Common myeloid progenitor, CD34-positive (primary cell): ENCODE measurements at regions of chr3 and their contacts with region 1.

Region 1: GRCh38 chr3:19213601-19214220 is 65.4 kb downstream of the KCNH8 start:
- DNase-seq: peak; percentile 62 to 83 (median 83)
- H3K4me3 ChIP-seq: no peak overlapping the region
- H3K27ac ChIP-seq: no peak overlapping the region
- H3K4me1 ChIP-seq: peaks cover 0 to 11% (median 6%) of the 10 kb centered on the region in 4 experiments
- H3K27me3 ChIP-seq: no peaks in the 10 kb centered on the region

Region 2: GRCh38 chr3:19146685-19147650 is 66.7 kb before region 1 on chr3:
- CTCF ChIA-PET with region 1: interaction called, 11 read pairs
- POLR2A ChIA-PET with region 1: no interaction called
- DNase-seq: peak; percentile 88 to 95 (median 94)
- H3K4me3 ChIP-seq: peak overlapping the region; percentile 70 to 91 (median 78)
- H3K27ac ChIP-seq: peak overlapping the region; percentile 40 to 61
- H3K4me1 ChIP-seq: peaks cover 9 to 23% (median 16%) of the 10 kb centered on the region in 4 experiments
- H3K27me3 ChIP-seq: peaks cover 3 to 26% (median 10%) of the 10 kb centered on the region in 5 experiments

Region 3: GRCh38 chr3:19190602-19191001 is 23.1 kb before region 1 on chr3:
- CTCF ChIA-PET with region 1: interaction called, 19 read pairs
- POLR2A ChIA-PET with region 1: no interaction called
- DNase-seq: peak; percentile 22 to 55 (median 45)
- H3K4me3 ChIP-seq: peak overlapping the region in 2 of 7 experiments; percentile 20 to 54
- H3K27ac ChIP-seq: peak overlapping the region in 1 of 2 experiments; percentile 14
- H3K4me1 ChIP-seq: peaks cover 4 to 20% (median 10%) of the 10 kb centered on the region in 4 experiments
- H3K27me3 ChIP-seq: no peaks in the 10 kb centered on the region

Region 4: GRCh38 chr3:19202303-19202702 is 11.4 kb before region 1 on chr3:
- CTCF ChIA-PET with region 1: no interaction called
- POLR2A ChIA-PET with region 1: no interaction called
- DNase-seq: no peak
- H3K4me3 ChIP-seq: no peak overlapping the region
- H3K27ac ChIP-seq: no peak overlapping the region
- H3K4me1 ChIP-seq: no peaks in the 10 kb centered on the region
- H3K27me3 ChIP-seq: no peaks in the 10 kb centered on the region

Region 5: DNA sequence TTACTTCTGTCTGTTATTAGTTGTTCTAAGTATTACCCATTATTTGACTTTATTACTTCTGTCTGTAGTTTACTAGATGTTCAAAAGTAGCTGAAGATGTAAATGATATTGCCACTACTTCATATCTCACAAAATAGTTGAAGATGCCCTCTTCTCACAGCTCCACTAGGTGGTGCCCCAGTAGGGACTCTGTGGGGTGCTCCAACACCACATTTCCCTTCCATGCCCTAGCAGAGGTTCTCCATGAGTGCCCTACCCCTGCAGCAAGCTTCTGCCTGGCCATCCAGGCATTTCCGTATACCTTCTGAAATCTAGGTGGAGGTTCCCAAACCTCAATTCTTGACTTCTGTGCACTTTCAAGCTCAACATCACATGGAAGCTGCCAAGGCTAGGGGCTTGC is 15.4 kb after region 1 on chr3:
- CTCF ChIA-PET with region 1: interaction called, 10 read pairs
- POLR2A ChIA-PET with region 1: interaction called, 3 read pairs
- DNase-seq: no peak
- H3K4me3 ChIP-seq: no peak overlapping the region
- H3K27ac ChIP-seq: no peak overlapping the region
- H3K4me1 ChIP-seq: peaks cover 3 to 9% (median 5%) of the 10 kb centered on the region in 4 experiments
- H3K27me3 ChIP-seq: no peaks in the 10 kb centered on the region

Region 6: DNA sequence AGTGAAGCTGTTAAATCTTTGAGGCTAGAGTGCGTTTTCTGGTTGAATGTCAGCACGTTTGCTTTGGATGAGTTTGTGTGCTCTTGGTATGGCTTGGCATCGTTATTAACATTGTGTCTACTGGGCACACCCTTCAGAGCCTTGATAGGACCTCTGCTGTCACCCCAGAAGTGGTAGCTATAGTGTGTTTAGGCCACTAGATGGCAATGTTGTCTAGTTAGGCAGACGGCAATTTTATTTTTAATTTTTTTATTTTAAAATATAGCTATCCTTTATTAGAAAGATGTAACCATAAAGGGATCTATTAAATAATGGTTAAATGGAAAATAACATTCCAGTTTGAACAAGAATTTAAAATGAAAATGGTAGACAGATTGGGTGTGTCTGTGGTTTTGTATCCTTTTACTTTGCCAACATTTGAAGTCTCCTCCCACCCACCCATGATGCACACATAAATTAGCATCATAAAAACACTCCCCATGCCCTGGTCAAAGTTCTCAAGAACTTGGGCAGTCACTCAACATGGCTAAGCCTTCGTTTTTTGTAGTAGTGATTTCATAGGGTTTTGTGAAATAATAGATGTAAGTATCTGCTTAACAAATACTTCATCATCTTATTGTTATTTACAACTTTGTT is 135.3 kb after region 1 on chr3:
- CTCF ChIA-PET with region 1: interaction called, 17 read pairs
- POLR2A ChIA-PET with region 1: no interaction called
- DNase-seq: peak; percentile 22 to 56 (median 48)
- H3K4me3 ChIP-seq: peak overlapping the region in 2 of 7 experiments; percentile 8 to 37
- H3K27ac ChIP-seq: no peak overlapping the region
- H3K4me1 ChIP-seq: peaks cover 6 to 24% (median 11%) of the 10 kb centered on the region in 4 experiments
- H3K27me3 ChIP-seq: no peaks in the 10 kb centered on the region